A549 (cell line): ENCODE measurements at regions of chr1 and their contacts with region 1.

Region 1: GRCh38 chr1:212477014-212477679 is 44.4 kb downstream of the NENF start:
- DNase-seq: peak; percentile 81 to 90
- ATAC-seq: peak; percentile 93 to 95
- H3K4me3 ChIP-seq: no peak overlapping the region
- H3K27ac ChIP-seq: peak overlapping the region; percentile 33 to 72; a peak in 5 of 6 replicates
- H3K4me1 ChIP-seq: peaks cover 21% of the 10 kb centered on the region
- CTCF ChIP-seq: peak; percentile 87
- EP300 ChIP-seq: no peak
- POLR2A ChIP-seq: no peak
- RAD21 ChIP-seq: peak; percentile 95

Region 2: GRCh38 chr1:212488397-212489283 is 11.5 kb after region 1 on chr1:
- CTCF ChIA-PET with region 1: interaction called, 39 read pairs
- POLR2A ChIA-PET with region 1: interaction called, 5 read pairs
- DNase-seq: peak; percentile 54 to 98
- ATAC-seq: peak; percentile 39 to 62
- H3K4me3 ChIP-seq: no peak overlapping the region
- H3K27ac ChIP-seq: peak overlapping the region; percentile 75 to 86
- H3K4me1 ChIP-seq: peaks cover 67% of the 10 kb centered on the region
- CTCF ChIP-seq: no peak
- EP300 ChIP-seq: peak; percentile 94; a peak in 4 of 5 replicates
- POLR2A ChIP-seq: no peak
- RAD21 ChIP-seq: peak in 1 of 2 experiments; percentile 1; a peak in 1 of 5 replicates

Region 3: DNA sequence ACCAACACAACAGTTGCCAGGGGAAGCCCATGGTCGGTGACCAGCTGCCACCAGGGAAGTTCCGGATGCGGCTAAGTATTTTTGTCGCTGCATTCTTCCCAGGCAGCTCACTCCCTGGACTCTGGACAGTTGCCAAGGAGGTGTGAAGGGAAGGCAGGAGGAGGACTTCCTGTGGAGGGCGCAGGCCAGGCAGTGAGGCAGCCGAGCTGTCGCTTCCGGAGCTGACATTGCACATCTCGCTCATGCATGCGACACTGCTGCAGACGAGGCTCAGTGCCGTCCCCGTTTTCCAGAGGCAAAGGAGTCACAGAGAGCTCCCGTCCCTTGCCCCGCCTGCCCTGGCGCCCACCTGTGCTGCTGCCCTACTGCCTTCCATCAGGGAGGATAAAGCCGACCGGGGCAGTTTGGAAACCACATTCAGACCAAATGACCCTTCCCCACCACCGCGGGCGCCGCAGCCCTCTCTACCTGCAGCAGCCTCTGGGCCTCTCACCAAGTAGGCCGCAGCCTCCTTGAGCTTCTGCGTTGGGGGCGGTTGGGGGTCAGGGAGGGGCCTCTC is 37.0 kb after region 1 on chr1:
- CTCF ChIA-PET with region 1: interaction called, 30 read pairs
- POLR2A ChIA-PET with region 1: interaction called, 3 read pairs
- DNase-seq: peak; percentile 59 to 80
- ATAC-seq: peak; percentile 25 to 49; a peak in 3 of 6 replicates
- H3K4me3 ChIP-seq: no peak overlapping the region
- H3K27ac ChIP-seq: peak overlapping the region; percentile 5 to 76; a peak in 5 of 6 replicates
- H3K4me1 ChIP-seq: peaks cover 36% of the 10 kb centered on the region
- CTCF ChIP-seq: no peak
- EP300 ChIP-seq: no peak
- POLR2A ChIP-seq: no peak
- RAD21 ChIP-seq: no peak

Region 4: GRCh38 chr1:212558693-212559480 is 81.7 kb after region 1 on chr1:
- CTCF ChIA-PET with region 1: interaction called, 18 read pairs
- POLR2A ChIA-PET with region 1: interaction called, 4 read pairs
- DNase-seq: peak; percentile 82 to 95
- ATAC-seq: peak; percentile 91 to 92
- H3K4me3 ChIP-seq: peak overlapping the region; percentile 69
- H3K27ac ChIP-seq: peak overlapping the region; percentile 89 to 95
- H3K4me1 ChIP-seq: peaks cover 16% of the 10 kb centered on the region
- CTCF ChIP-seq: no peak
- EP300 ChIP-seq: no peak; a peak in 1 of 5 replicates
- POLR2A ChIP-seq: no peak; the same call in 1 of the 2 replicates
- RAD21 ChIP-seq: peak in 1 of 2 experiments; percentile 20; a peak in 1 of 5 replicates

Region 5: GRCh38 chr1:212595787-212596714 is 118.9 kb after region 1 on chr1:
- CTCF ChIA-PET with region 1: interaction called, 57 read pairs
- POLR2A ChIA-PET with region 1: no interaction called
- DNase-seq: peak; percentile 62 to 85
- ATAC-seq: peak; percentile 86 to 87
- H3K4me3 ChIP-seq: no peak overlapping the region; the same call in 2 of the 3 replicates
- H3K27ac ChIP-seq: peak overlapping the region; percentile 79 to 84
- H3K4me1 ChIP-seq: peaks cover 31% of the 10 kb centered on the region
- CTCF ChIP-seq: peak; percentile 69
- EP300 ChIP-seq: peak; percentile 57 to 60; a peak in 3 of 5 replicates
- POLR2A ChIP-seq: no peak
- RAD21 ChIP-seq: peak; percentile 49 to 64; a peak in 4 of 5 replicates

Region 6: GRCh38 chr1:212630158-212630900 is 153.2 kb after region 1 on chr1:
- CTCF ChIA-PET with region 1: interaction called, 66 read pairs
- POLR2A ChIA-PET with region 1: no interaction called
- DNase-seq: peak; percentile 45 to 75
- ATAC-seq: peak; percentile 69 to 91
- H3K4me3 ChIP-seq: no peak overlapping the region
- H3K27ac ChIP-seq: no peak overlapping the region
- H3K4me1 ChIP-seq: no peaks in the 10 kb centered on the region
- CTCF ChIP-seq: peak; percentile 54
- EP300 ChIP-seq: no peak
- POLR2A ChIP-seq: no peak
- RAD21 ChIP-seq: peak; percentile 45 to 57